ENCODE measurements at regions of chr6 and their contacts with region 1.

Region 1: GRCh38 chr6:72411872-72412708 is 209.8 kb upstream of the KCNQ5 start:
- DNase-seq: peak; percentile 80
- ATAC-seq: peak; percentile 100
- H3K4me3 Mint-ChIP-seq: no peak overlapping the region
- H3K27ac Mint-ChIP-seq: no peak overlapping the region
- H3K4me1 Mint-ChIP-seq: no peaks in the 10 kb centered on the region
- H3K27me3 Mint-ChIP-seq: peaks cover 3% of the 10 kb centered on the region
- CTCF ChIP-seq: peak; percentile 100

Region 2: DNA sequence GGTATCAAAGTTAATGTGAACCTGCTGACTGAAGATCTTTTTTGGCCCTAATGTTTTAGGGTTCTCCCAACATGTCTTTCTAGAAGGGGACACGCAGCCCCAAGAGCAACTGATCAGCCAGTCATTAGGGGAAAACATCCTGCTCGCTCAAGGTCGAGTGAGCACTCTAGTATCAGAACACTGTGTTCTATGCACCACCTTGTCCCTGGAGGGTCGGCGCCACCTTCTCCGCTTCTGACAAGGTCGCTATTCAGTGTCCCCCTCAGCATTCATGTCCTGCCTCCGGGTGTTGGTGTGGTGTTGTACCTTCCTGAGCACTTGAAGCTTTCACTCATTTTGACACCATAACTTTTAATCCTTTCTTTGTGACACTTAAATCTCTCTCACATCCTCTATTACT is 121.5 kb before region 1 on chr6:
- CTCF ChIA-PET with region 1: no interaction called
- POLR2A ChIA-PET with region 1: no interaction called
- intact Hi-C with region 1: no loop called
- DNase-seq: no peak
- ATAC-seq: no peak
- H3K4me3 Mint-ChIP-seq: no peak overlapping the region
- H3K27ac Mint-ChIP-seq: no peak overlapping the region
- H3K4me1 Mint-ChIP-seq: no peaks in the 10 kb centered on the region
- H3K27me3 Mint-ChIP-seq: no peaks in the 10 kb centered on the region
- CTCF ChIP-seq: no peak

Region 3: DNA sequence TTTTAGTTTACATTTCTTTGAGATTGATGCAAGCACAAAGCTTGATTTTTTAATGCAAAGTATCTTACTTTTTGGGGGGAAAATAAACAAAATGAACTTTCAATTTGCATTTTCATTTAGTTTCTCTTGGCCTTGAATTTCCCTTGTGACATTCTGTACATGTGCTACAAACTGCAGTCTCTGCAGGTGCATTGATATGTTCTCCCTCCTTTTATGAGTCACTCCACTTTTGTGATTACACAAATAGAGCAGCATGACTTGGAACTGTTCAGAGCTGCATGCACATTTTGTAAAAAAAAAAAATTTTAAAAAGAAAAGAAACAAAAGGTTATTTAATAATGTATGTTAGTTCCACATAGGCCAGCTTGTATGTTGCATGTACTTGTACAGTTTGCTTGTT is 10.2 kb before region 1 on chr6:
- CTCF ChIA-PET with region 1: interaction called, 10 read pairs
- POLR2A ChIA-PET with region 1: no interaction called
- intact Hi-C with region 1: no loop called
- DNase-seq: no peak
- ATAC-seq: no peak
- H3K4me3 Mint-ChIP-seq: no peak overlapping the region
- H3K27ac Mint-ChIP-seq: no peak overlapping the region
- H3K4me1 Mint-ChIP-seq: no peaks in the 10 kb centered on the region
- H3K27me3 Mint-ChIP-seq: peaks cover 4% of the 10 kb centered on the region
- CTCF ChIP-seq: no peak

Region 4: DNA sequence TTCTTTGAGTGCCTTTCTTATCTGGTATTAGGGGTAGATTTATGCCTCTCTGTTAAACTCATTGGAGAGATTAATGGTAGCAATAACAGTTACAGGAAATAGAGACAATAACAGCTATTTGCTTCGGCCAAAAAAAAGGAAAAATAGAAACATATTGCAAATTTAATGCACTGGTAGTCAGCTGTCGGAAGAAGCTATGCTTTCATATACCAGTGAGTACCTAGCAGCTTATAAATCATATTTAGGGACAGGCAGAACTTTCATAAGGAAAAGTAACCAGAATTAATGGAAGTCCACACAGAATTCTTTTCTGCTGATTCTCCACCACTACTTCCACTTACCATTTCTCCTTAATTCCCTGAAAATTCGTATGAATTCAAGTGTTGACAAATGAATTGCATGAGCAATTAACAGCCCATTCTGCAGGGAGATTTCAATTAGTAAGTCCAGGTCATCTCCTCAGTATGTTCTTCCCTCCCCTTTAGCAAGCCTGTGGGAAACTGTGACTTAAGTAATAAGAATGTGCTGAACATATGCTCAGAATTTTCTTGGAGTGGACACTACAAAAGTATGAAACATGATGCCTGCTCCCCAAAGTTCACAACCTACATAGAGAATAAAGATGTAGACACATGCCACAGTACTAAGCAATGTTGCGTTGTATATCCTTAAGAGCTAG is 13.1 kb after region 1 on chr6:
- CTCF ChIA-PET with region 1: interaction called, 53 read pairs
- POLR2A ChIA-PET with region 1: no interaction called
- intact Hi-C with region 1: no loop called
- DNase-seq: no peak
- ATAC-seq: no peak
- H3K4me3 Mint-ChIP-seq: no peak overlapping the region
- H3K27ac Mint-ChIP-seq: no peak overlapping the region
- H3K4me1 Mint-ChIP-seq: no peaks in the 10 kb centered on the region
- H3K27me3 Mint-ChIP-seq: peaks cover 10% of the 10 kb centered on the region
- CTCF ChIP-seq: no peak

Region 5: DNA sequence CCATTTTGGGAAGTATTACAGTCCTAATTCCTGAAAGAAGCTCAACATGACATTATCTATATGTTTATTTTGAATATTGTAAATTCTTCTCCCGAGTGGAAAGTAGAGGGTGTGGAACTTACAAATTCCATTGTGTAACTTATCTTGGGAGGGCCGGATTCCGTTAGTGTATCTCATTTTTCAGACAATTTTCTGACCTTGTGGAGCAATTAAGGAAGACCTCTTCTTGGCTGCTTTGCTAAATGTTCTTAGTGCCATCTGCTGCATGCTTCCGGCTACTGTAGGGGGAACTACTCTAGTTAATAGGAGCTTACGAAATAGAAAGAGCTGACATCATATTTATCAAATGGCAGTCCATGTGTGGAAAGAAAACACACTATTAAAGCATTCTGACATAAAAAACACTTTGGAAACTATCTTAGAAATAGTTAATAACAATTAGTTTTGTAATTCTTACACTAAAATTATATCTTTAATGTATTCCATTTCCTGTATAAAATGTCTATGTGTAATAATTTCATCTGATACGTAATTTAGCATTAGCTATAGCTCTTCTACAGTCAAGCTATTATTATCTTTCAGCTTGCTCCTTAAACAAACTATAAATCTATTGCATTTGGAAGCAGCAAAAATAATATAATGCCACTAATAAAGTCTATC is 168.3 kb after region 1 on chr6:
- CTCF ChIA-PET with region 1: interaction called, 13 read pairs
- POLR2A ChIA-PET with region 1: no interaction called
- intact Hi-C with region 1: loop called (anchors 10 kb)
- DNase-seq: peak; percentile 27
- ATAC-seq: no peak
- H3K4me3 Mint-ChIP-seq: no peak overlapping the region
- H3K27ac Mint-ChIP-seq: no peak overlapping the region
- H3K4me1 Mint-ChIP-seq: peaks cover 2% of the 10 kb centered on the region
- H3K27me3 Mint-ChIP-seq: peaks cover 5% of the 10 kb centered on the region
- CTCF ChIP-seq: peak; percentile 28

Region 6: GRCh38 chr6:72622094-72622940 is 210.2 kb after region 1 on chr6:
- CTCF ChIA-PET with region 1: interaction called, 34 read pairs
- POLR2A ChIA-PET with region 1: no interaction called
- intact Hi-C with region 1: no loop called
- DNase-seq: peak; percentile 73
- ATAC-seq: peak; percentile 13
- H3K4me3 Mint-ChIP-seq: peak overlapping the region; percentile 96
- H3K27ac Mint-ChIP-seq: peak overlapping the region; percentile 98
- H3K4me1 Mint-ChIP-seq: peaks cover 60% of the 10 kb centered on the region
- H3K27me3 Mint-ChIP-seq: no peaks in the 10 kb centered on the region
- CTCF ChIP-seq: peak; percentile 35

Region 7: GRCh38 chr6:73129653-73130443 is 717.8 kb after region 1 on chr6:
- CTCF ChIA-PET with region 1: interaction called, 46 read pairs
- POLR2A ChIA-PET with region 1: no interaction called
- intact Hi-C with region 1: loop called (anchors 1 kb)
- DNase-seq: peak; percentile 91
- ATAC-seq: peak; percentile 96
- H3K4me3 Mint-ChIP-seq: no peak overlapping the region
- H3K27ac Mint-ChIP-seq: no peak overlapping the region
- H3K4me1 Mint-ChIP-seq: peaks cover 1% of the 10 kb centered on the region
- H3K27me3 Mint-ChIP-seq: no peaks in the 10 kb centered on the region
- CTCF ChIP-seq: peak; percentile 98

Region 8: GRCh38 chr6:73180763-73181619 is 768.9 kb after region 1 on chr6:
- CTCF ChIA-PET with region 1: interaction called, 5 read pairs
- POLR2A ChIA-PET with region 1: no interaction called
- intact Hi-C with region 1: loop called (anchors 5 kb)
- DNase-seq: no peak
- ATAC-seq: peak; percentile 93
- H3K4me3 Mint-ChIP-seq: no peak overlapping the region
- H3K27ac Mint-ChIP-seq: no peak overlapping the region
- H3K4me1 Mint-ChIP-seq: peaks cover 4% of the 10 kb centered on the region
- H3K27me3 Mint-ChIP-seq: no peaks in the 10 kb centered on the region
- CTCF ChIP-seq: peak; percentile 70

Measured in activated CD8-positive, alpha-beta T cell treated with anti-CD3 and anti-CD28 coated beads for 36 hours (primary cell).